ENCODE measurements at regions of chr11 and their contacts with region 1.

Region 1: DNA sequence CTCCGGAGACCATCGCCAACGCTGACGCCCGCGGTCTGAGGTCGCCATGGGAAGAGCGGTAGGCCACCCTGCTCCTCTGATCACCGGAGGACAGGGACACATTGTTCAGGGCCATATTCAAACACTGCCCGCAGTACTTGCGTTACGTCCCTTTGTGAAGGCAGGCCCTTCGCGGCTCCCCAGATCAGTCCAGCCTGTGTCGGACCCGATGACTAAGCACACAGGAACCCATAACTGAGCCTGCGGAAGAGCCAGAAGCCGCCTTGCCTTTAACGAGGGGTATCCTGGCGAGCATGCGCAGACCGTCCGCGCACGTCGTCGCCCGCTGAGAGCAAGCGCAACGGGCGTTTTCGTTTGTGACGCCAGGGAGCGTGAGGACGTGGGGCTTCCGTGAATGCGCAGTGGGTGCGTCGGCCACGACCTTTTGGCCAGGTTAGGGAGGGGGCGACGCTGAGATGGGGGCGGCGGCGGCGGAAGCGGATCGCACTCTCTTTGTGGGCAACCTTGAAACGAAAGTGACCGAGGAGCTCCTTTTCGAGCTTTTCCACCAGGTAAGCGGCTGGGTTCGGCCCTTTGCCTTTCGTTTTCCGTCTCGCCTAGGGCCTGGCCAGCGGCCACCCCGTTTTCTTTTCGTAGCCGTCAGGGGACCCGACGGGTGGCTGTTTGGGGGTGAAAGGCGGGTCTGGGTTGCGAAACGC is at the starts of genes C11orf71 and RBM7:
- DNase-seq: peak; percentile 99 to 100
- ATAC-seq: peak; percentile 95 to 96 (median 96)
- H3K4me3 ChIP-seq: peak within 1 kb of the TSS; percentile 88
- H3K27ac ChIP-seq: peak within 1 kb of the TSS; percentile 98
- H3K4me1 ChIP-seq: peaks cover 27% of the 10 kb centered on the region
- H3K27me3 ChIP-seq: no peaks in the 10 kb centered on the region
- CTCF ChIP-seq: no peak
- total RNA-seq, gene C11orf71: 7.8 to 18.1 (median 11.5) TPM
- total RNA-seq, gene RBM7: 9.1 to 24.1 (median 17.3) TPM

Region 2: DNA sequence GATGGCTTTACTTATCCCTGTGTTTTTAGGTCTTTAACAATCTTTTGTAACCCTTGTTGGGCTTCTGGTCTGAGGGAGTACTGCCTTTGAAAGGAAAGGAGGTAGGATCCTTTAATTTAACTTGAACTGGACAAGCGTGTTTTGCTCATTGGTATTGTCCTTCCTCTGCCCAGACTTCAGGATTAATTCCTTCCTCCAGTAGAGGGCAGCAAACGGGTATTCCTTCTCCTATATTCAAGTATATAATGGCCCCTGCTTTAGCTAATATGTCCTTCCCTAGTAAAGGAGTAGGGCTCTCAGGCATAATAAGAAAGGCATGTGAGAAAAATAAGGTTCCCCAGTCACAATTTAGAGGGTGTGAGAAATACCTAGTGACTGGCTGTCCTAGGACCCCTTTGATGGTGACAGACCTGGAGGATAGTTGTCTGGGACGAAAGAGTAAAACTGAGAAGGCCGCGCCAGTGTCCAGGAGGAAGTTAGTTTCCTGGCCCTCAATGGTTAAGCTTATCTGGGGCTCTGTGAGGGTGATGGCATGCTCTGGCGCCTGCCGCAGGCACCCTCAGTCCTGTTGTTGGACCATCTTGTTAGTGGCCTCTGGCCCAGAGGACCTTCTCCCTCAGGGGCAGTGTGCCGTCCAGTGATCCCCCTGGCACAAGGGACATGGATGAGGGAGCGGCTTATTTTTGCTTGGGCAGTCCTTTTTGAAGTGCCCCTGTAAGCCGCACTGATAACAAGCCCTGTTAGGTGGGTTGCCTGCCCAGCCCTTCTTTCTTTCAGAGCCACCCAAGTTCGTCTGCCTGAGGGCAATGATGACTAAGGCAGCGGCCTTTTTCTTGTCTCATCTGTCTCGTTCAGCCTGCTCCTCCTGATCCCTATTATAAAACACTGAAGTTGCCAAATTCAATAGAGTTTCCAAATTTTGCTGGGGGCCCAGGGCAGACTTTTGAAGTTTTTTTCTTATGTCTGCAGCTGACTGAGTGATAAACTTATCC is 51.9 kb before region 1 on chr11:
- intact Hi-C with region 1: loop called in 1 of 2 experiments (anchors 5 kb)
- DNase-seq: no peak
- ATAC-seq: peak in 2 of 4 donors; percentile 68 to 75
- H3K4me3 ChIP-seq: no peak overlapping the region
- H3K27ac ChIP-seq: no peak overlapping the region
- H3K4me1 ChIP-seq: no peaks in the 10 kb centered on the region
- H3K27me3 ChIP-seq: no peaks in the 10 kb centered on the region
- CTCF ChIP-seq: peak; percentile 54

Region 3: GRCh38 chr11:114439229-114440120 is 39.1 kb after region 1 on chr11 and contains the start of gene REXO2:
- intact Hi-C with region 1: loop called (anchors 1 to 5 kb)
- DNase-seq: peak; percentile 95 to 98
- ATAC-seq: peak; percentile 96 to 98 (median 98)
- H3K4me3 ChIP-seq: peak within 1 kb of the TSS; percentile 92
- H3K27ac ChIP-seq: peak within 1 kb of the TSS; percentile 85
- H3K4me1 ChIP-seq: peaks cover 23% of the 10 kb centered on the region
- H3K27me3 ChIP-seq: no peaks in the 10 kb centered on the region
- CTCF ChIP-seq: peak; percentile 23
- total RNA-seq, gene REXO2: 44.1 to 77.4 (median 61.9) TPM

Measured in psoas muscle (tissue), 8 donors.